ENCODE measurements at regions of chr3 and their contacts with region 1.

Region 1: GRCh38 chr3:115861166-115861733 is 237.9 kb downstream of the GAP43 start:
- DNase-seq: no peak
- H3K4me3 ChIP-seq: no peak overlapping the region
- H3K27ac ChIP-seq: no peak overlapping the region
- H3K27me3 ChIP-seq: no peaks in the 10 kb centered on the region
- CTCF ChIP-seq: no peak

Region 2: DNA sequence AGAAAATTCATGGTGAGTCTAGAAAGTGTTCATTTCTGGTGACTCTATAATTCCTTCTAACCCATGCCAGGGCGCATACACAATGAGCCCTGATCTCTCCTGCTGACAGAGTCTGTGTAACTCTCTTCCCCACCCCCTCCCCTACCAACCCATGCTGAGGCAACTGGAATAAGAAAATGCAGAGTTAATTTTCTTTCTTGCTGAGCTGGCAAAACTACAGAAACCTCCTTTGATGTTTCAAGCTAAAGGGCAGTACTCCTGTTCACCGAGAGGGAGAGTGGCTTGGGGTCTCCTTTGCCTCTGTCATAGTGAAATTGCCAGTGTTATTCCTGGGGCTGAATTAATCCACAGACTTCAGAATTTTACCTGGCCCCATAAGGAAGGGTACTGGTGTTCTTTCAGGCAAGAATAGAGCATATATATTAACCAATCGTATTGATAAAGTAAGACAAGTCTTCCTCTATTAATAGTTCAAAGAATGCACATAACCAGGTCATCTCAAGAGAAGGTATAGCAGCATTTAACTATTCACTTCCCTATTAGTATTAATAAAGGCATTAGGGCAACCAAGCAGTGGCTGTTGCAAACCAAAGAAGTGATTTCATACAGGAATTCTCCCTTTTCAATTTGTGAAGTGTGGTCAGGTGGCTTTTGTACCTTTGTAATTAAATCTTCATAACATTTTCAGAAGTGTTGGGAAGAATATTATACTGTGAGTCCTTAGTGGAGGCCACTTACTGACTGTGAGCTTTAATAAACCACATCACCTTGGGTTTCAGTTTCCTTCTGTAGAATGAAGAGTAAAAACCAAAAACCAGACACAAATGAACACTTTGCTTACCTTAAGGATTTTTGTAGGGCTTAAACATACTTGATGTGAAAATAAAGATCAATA is 233.8 kb before region 1 on chr3:
- CTCF ChIA-PET with region 1: interaction called, 12 read pairs
- POLR2A ChIA-PET with region 1: no interaction called
- DNase-seq: no peak
- H3K4me3 ChIP-seq: no peak overlapping the region
- H3K27ac ChIP-seq: no peak overlapping the region
- H3K27me3 ChIP-seq: peaks cover 34% of the 10 kb centered on the region
- CTCF ChIP-seq: no peak

Region 3: GRCh38 chr3:115848641-115849040 is 12.6 kb before region 1 on chr3:
- CTCF ChIA-PET with region 1: no interaction called
- POLR2A ChIA-PET with region 1: no interaction called
- DNase-seq: no peak
- H3K4me3 ChIP-seq: no peak overlapping the region
- H3K27ac ChIP-seq: no peak overlapping the region
- H3K27me3 ChIP-seq: no peaks in the 10 kb centered on the region
- CTCF ChIP-seq: no peak